HEK293 (cell line): ENCODE measurements at regions of chr11 and their contacts with region 1.

Region 1: DNA sequence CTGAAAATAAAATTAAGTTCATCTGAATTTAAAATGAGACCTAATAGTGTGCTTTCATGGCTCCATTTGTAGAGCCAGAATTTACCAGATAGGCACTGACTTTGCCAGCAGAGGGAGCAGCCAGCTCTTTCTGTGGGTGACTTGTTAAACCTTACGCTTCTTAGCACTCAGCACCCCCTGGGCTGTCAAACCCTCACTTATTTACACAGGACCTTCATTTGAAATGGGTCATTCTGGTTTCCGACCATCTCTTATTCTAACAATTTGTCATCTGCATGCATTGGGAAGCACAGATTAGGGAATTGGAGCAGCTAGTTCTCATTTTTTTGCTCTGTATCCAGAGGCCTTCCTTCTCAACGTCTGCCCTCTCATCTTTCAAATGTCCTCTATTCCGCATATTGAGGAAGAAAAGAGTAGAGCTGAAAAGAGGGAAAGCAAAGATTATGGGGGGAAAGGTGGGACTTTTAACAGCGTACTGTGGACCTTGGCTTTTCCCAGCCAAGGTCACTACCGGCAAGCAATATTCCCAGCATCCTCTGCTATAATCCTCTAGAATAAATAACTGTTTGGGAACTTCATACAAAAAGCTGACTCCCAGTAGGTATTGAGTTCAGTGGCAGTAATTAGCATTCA is 3.1 kb downstream of the ASRGL1 start:
- H3K4me3 ChIP-seq: no peak overlapping the region
- H3K27ac ChIP-seq: no peak overlapping the region
- H3K4me1 ChIP-seq: peaks cover 6% of the 10 kb centered on the region; the same call in 1 of the 2 replicates
- CTCF ChIP-seq: peak; percentile 41; the same call in 1 of the 2 replicates

Region 2: GRCh38 chr11:62372871-62373270 is 32.5 kb after region 1 on chr11:
- CTCF ChIA-PET with region 1: interaction called, 13 read pairs
- POLR2A ChIA-PET with region 1: no interaction called
- H3K4me3 ChIP-seq: no peak overlapping the region
- H3K27ac ChIP-seq: no peak overlapping the region
- H3K4me1 ChIP-seq: no peaks in the 10 kb centered on the region
- CTCF ChIP-seq: no peak